Mucosa of descending colon (tissue), 3 donors: ENCODE measurements at regions of chr15 and their contacts with region 1.

Region 1: GRCh38 chr15:33067941-33068481 is 126.5 kb downstream of the FMN1 start:
- DNase-seq: peak; percentile 89 to 91 (median 90)
- ATAC-seq: peak; percentile 84
- H3K4me3 ChIP-seq: no peak overlapping the region
- H3K4me1 ChIP-seq: no peaks in the 10 kb centered on the region
- CTCF ChIP-seq: no peak

Region 2: DNA sequence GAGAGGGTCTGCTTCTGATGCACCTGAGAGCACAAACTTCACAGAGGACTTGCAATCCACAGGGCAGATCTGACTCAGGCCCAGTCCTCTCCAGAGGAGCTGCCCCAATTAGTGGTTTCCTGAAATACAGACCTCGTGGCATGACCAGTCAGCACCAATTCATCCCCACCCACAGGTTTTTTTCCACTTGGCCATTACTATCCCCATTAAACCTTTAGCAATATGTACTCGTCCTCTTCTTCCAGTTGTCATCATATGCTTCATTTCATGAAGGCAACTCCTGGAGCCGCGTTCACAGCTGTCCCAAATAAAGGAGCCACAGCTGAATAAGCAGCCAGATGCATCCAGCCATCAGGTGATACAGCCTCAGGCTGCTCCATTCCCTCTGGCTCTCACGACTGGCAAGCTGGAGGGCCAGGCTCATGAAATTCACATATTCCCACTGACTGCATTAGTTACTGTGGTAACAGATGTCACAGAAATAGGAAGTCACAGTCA is 36.6 kb before region 1 on chr15:
- intact Hi-C with region 1: loop called in 1 of 2 experiments (anchors 5 kb)
- DNase-seq: no peak
- ATAC-seq: peak; percentile 22
- H3K4me3 ChIP-seq: no peak overlapping the region
- H3K4me1 ChIP-seq: peaks cover 45% of the 10 kb centered on the region
- CTCF ChIP-seq: no peak